ENCODE measurements at regions of chr17 and their contacts with region 1.

Region 1: GRCh38 chr17:48457080-48457836 is 27.2 kb upstream of the SKAP1 start:
- DNase-seq: peak; percentile 86
- ATAC-seq: peak; percentile 72
- H3K4me3 Mint-ChIP-seq: peak overlapping the region; percentile 57
- H3K27ac Mint-ChIP-seq: peak overlapping the region; percentile 41
- H3K4me1 Mint-ChIP-seq: peaks cover 57% of the 10 kb centered on the region
- H3K27me3 Mint-ChIP-seq: no peaks in the 10 kb centered on the region

Region 2: DNA sequence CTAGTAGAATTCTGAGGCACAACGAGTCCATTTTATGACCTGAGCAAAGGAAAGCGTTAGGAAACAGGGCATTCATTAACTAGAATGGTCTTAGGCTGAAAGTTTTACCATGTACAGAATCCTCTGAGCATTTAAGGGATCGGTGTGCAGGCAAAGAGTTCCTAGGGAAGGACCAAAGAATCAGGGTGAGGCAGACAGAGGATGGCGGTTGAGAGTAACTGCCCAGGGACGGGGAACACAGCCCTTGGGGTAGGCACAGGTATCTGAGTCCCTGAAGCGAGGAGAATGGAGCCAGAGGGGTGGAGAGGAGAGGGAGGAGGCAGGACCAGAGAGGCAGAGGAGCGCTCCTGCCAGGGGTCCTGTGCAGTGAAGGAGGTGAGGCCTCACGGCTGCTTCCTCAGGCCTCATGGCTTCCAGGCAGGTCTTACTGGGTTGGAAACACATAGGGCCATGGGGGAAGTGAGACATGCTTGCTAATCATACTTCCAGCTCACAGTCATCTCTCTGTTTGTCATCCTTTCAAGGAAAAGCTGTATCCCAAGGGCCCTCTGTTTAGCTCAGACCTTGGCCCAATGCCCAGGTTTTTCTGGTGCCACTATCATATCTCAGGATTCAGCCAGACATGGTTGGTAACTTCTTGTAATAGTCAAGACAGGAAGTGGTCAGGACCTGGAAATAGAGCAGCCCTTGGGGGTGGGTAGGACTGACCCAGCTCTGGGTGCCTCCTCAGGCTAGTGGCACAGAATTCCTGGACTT is 1217.5 kb before region 1 on chr17:
- CTCF ChIA-PET with region 1: no interaction called
- POLR2A ChIA-PET with region 1: no interaction called
- intact Hi-C with region 1: no loop called
- DNase-seq: no peak
- ATAC-seq: peak; percentile 39
- H3K4me3 Mint-ChIP-seq: no peak overlapping the region
- H3K27ac Mint-ChIP-seq: no peak overlapping the region
- H3K4me1 Mint-ChIP-seq: peaks cover 4% of the 10 kb centered on the region
- H3K27me3 Mint-ChIP-seq: peaks cover 2% of the 10 kb centered on the region

Region 3: DNA sequence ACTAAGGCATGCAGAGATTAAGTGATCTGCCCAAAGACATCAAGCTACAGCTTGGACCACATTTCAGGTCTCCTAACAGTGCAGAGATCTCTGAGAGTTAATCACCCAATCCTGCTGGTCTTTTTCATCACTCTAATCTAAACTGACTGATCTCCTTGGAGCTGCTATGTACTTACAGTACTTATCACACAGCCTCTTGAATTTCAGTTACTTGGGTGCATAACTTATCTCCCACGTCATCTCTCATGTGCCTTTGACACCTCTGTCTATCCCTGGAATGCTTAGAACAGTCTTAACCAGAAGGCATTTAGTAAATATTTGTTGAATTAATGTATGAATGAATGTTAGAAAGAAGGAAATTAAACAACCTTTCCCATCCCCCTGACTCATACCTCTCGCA is 210.6 kb before region 1 on chr17:
- CTCF ChIA-PET with region 1: no interaction called
- POLR2A ChIA-PET with region 1: no interaction called
- intact Hi-C with region 1: no loop called
- DNase-seq: no peak
- ATAC-seq: no peak
- H3K4me3 Mint-ChIP-seq: no peak overlapping the region
- H3K27ac Mint-ChIP-seq: no peak overlapping the region
- H3K4me1 Mint-ChIP-seq: peaks cover 41% of the 10 kb centered on the region
- H3K27me3 Mint-ChIP-seq: no peaks in the 10 kb centered on the region

Region 4: DNA sequence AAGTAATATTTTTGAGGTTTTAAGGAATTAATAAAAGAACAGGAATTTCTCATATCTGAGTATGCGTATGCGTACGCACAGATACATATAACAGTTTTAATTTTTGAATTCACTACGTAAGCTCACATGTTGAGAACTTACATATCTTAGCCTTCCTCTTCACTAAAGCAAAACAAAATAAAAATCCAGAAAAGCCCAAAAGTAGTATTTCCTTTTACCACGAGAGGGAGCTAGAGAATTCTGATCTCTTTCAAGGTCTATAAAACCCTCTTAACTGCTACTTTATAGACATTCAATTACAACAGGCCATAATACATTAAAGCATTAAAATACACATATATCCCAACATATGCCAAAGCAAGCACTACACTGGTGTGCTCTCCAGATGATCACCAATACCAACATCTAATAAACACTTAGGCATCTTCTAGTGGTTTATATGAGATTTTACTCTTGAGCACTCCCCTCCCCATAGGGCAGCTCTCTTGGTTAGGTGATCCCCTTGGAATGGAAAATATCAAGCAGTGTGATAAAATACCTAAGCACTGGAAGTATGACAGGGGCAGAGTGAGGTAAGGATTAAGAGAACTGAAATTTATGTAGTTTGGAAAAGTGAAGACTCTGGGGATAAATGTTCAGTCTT is 121.3 kb before region 1 on chr17:
- CTCF ChIA-PET with region 1: interaction called, 26 read pairs
- POLR2A ChIA-PET with region 1: no interaction called
- intact Hi-C with region 1: loop called (anchors 1 to 5 kb)
- DNase-seq: no peak
- ATAC-seq: peak; percentile 51
- H3K4me3 Mint-ChIP-seq: no peak overlapping the region
- H3K27ac Mint-ChIP-seq: no peak overlapping the region
- H3K4me1 Mint-ChIP-seq: peaks cover 11% of the 10 kb centered on the region
- H3K27me3 Mint-ChIP-seq: no peaks in the 10 kb centered on the region

Region 5: DNA sequence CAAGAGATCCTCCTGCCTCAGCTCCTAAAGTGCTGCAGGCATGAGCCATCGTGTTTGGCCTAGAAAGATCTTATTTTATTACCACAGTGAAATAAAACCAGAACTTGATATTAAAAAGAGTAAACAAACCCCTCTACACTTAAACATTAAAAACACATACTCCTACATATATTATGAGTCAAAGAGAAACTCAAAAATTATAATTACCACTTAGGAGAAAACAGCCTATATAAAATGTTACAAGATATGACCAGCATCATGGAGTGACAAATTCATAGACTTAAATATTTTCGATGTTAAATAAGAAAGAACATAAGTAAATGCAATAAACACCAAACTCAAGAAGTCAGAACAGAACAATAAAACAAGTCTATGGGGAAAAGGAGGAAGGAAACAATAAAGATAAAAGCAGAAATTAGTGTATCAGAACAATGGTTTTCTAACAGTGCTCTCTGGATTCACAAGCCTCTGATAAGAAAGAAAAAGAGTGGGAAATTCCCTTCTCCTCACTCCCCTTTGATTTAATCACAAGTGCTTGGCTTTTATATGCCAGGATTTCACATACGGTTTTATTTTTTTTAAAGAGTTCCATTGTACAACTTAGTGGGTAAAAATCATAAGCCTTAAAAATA is 50.2 kb before region 1 on chr17:
- CTCF ChIA-PET with region 1: interaction called, 13 read pairs
- POLR2A ChIA-PET with region 1: no interaction called
- intact Hi-C with region 1: loop called in 1 of 2 experiments (anchors 2 kb)
- DNase-seq: no peak
- ATAC-seq: peak; percentile 40
- H3K4me3 Mint-ChIP-seq: peak overlapping the region; percentile 33
- H3K27ac Mint-ChIP-seq: peak overlapping the region; percentile 82
- H3K4me1 Mint-ChIP-seq: peaks cover 61% of the 10 kb centered on the region
- H3K27me3 Mint-ChIP-seq: no peaks in the 10 kb centered on the region

Region 6: GRCh38 chr17:48429638-48430586 is 27.3 kb before region 1 on chr17 and contains the start of gene SKAP1:
- CTCF ChIA-PET with region 1: interaction called, 8 read pairs
- POLR2A ChIA-PET with region 1: no interaction called
- intact Hi-C with region 1: loop called in 1 of 2 experiments (anchors 1 kb)
- DNase-seq: peak; percentile 77
- ATAC-seq: peak; percentile 62
- H3K4me3 Mint-ChIP-seq: peak within 1 kb of the TSS; percentile 94
- H3K27ac Mint-ChIP-seq: peak within 1 kb of the TSS; percentile 98
- H3K4me1 Mint-ChIP-seq: peaks cover 57% of the 10 kb centered on the region
- H3K27me3 Mint-ChIP-seq: no peaks in the 10 kb centered on the region
- total RNA-seq, gene SKAP1: 76.1 to 109 TPM

Region 7: GRCh38 chr17:48483471-48484131 is 26.3 kb after region 1 on chr17:
- CTCF ChIA-PET with region 1: no interaction called
- POLR2A ChIA-PET with region 1: no interaction called
- intact Hi-C with region 1: loop called in 1 of 2 experiments (anchors 2 kb)
- DNase-seq: peak; percentile 62
- ATAC-seq: peak; percentile 57
- H3K4me3 Mint-ChIP-seq: no peak overlapping the region
- H3K27ac Mint-ChIP-seq: no peak overlapping the region
- H3K4me1 Mint-ChIP-seq: peaks cover 32% of the 10 kb centered on the region
- H3K27me3 Mint-ChIP-seq: peaks cover 5% of the 10 kb centered on the region